MCF 10A (cell line): ENCODE measurements at regions of chr6 and their contacts with region 1.

Region 1: DNA sequence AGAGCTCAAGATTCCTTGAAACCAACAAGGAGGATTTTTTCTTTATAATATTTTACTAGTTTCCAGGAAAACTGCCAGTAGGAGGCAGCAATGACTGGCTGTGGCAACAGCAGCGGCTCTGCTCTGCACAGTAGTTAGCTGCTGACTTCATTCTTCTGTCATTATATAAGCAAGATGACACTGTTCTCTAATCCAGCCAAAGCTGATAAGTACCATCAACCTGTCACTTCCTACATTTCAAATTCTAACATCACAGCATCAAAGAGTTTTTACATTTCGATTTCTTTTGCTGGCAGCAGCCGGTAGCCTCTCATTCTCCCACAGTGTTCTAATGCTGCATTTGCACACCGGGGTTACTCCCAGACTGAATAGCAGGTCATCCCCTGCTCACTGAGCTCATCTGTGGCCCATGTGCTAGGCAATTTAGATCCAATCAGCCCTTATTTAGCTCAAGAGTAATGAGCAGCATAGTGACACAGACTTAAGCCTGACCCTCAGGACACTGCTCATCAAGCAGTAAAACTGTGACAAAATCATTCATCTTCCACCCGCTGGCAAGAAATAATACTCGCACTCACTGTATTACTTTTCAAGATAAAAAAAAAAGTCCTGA is 67.8 kb downstream of the MMS22L start:
- DNase-seq: peak; percentile 43
- H3K4me3 Mint-ChIP-seq: no peak overlapping the region
- H3K27ac Mint-ChIP-seq: no peak overlapping the region
- H3K4me1 Mint-ChIP-seq: no peaks in the 10 kb centered on the region
- H3K27me3 Mint-ChIP-seq: no peaks in the 10 kb centered on the region
- CTCF ChIP-seq: peak; percentile 31

Region 2: GRCh38 chr6:97195117-97195516 is 20.1 kb before region 1 on chr6:
- CTCF ChIA-PET with region 1: interaction called, 14 read pairs
- POLR2A ChIA-PET with region 1: interaction called, 4 read pairs
- intact Hi-C with region 1: no loop called
- DNase-seq: peak; percentile 7
- H3K4me3 Mint-ChIP-seq: no peak overlapping the region
- H3K27ac Mint-ChIP-seq: no peak overlapping the region
- H3K4me1 Mint-ChIP-seq: peaks cover 13% of the 10 kb centered on the region
- H3K27me3 Mint-ChIP-seq: no peaks in the 10 kb centered on the region
- CTCF ChIP-seq: no peak

Region 3: DNA sequence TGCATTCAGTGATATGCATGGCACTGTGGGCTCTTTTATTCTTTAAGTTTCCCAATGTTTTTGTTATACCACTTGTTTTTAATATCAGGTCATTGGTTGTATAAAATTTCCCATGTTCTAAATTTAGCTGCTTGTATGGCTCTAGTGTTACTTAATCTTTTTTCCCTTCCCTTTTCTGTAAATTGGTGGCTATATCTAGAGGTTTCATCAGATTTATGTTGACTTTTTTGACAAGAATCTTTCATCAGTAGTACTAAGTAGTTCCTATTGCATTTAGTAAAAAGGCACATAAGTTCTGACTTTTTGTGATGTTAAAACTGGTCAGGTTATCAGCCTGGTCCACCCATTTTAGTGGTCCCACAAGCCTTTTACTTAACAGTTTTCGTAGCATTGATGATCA is 16.6 kb after region 1 on chr6:
- CTCF ChIA-PET with region 1: interaction called, 13 read pairs
- POLR2A ChIA-PET with region 1: interaction called, 5 read pairs
- intact Hi-C with region 1: no loop called
- DNase-seq: no peak
- H3K4me3 Mint-ChIP-seq: no peak overlapping the region
- H3K27ac Mint-ChIP-seq: no peak overlapping the region
- H3K4me1 Mint-ChIP-seq: no peaks in the 10 kb centered on the region
- H3K27me3 Mint-ChIP-seq: no peaks in the 10 kb centered on the region
- CTCF ChIP-seq: no peak

Region 4: GRCh38 chr6:97246842-97247241 is 31.6 kb after region 1 on chr6:
- CTCF ChIA-PET with region 1: interaction called, 16 read pairs
- POLR2A ChIA-PET with region 1: no interaction called
- intact Hi-C with region 1: no loop called
- DNase-seq: no peak
- H3K4me3 Mint-ChIP-seq: no peak overlapping the region
- H3K27ac Mint-ChIP-seq: no peak overlapping the region
- H3K4me1 Mint-ChIP-seq: no peaks in the 10 kb centered on the region
- H3K27me3 Mint-ChIP-seq: no peaks in the 10 kb centered on the region
- CTCF ChIP-seq: no peak